WTC11 (cell line): ENCODE measurements at regions of chr17 and their contacts with region 1.

Region 1: GRCh38 chr17:48636177-48637018 is 10.2 kb upstream of the HOXB9 start:
- DNase-seq: peak; percentile 99
- ATAC-seq: peak; percentile 89
- H3K4me3 Mint-ChIP-seq: peak overlapping the region; percentile 45
- H3K27ac Mint-ChIP-seq: no peak overlapping the region
- H3K4me1 Mint-ChIP-seq: peaks cover 18% of the 10 kb centered on the region
- H3K27me3 Mint-ChIP-seq: peaks cover 100% of the 10 kb centered on the region; the same call in 1 of the 2 replicates
- CTCF ChIP-seq: peak; percentile 62

Region 2: DNA sequence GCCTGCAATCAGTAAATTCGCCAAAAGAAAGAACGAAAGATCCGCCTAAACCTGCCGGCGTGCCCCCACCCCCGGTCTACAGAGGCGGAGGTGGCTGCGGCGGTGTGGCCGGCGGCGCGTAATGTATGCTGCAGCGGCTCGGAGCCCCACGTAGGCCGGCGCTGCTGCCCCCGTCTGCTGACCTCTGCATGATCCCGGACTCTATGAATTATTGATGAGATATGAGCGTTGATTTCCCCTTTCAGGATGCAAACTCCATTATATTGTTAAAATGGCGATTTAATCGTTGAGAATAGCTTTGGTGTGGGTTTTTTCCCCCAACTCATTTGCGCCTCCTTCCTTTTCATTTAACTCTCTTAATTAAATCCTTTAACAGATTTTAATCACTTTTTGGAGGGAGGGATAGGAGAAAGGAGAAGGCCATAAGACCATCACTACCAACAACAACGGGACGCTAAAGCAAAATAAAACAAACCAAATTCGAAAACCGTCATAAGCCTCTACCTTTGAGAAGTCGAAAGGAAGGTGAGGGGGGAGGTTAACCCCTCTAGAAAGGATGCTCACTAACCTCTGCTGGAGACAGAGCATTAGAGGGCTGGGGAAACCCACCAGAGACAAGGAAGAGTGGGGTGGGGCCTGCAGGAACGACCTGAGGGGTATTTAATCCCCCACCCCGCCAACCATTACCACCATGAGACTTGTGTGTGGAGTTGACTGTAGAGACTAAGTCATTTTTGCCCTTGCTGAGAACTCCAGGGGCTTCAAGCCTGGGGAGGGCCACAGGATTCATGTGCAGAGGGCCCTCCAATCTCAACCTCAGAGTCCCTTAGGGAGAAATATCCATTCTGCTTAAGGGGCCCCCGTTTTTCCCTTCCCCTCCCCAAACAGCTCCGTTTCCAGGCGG is 49.8 kb before region 1 on chr17:
- CTCF ChIA-PET with region 1: interaction called, 21 read pairs
- POLR2A ChIA-PET with region 1: no interaction called
- DNase-seq: no peak
- ATAC-seq: no peak
- H3K4me3 Mint-ChIP-seq: no peak overlapping the region
- H3K27ac Mint-ChIP-seq: no peak overlapping the region
- H3K4me1 Mint-ChIP-seq: peaks cover 43% of the 10 kb centered on the region
- H3K27me3 Mint-ChIP-seq: peaks cover 100% of the 10 kb centered on the region; the same call in 1 of the 2 replicates
- CTCF ChIP-seq: no peak

Region 3: GRCh38 chr17:48625495-48626244 is 10.7 kb before region 1 on chr17:
- CTCF ChIA-PET with region 1: interaction called, 54 read pairs
- POLR2A ChIA-PET with region 1: no interaction called
- DNase-seq: peak; percentile 69
- ATAC-seq: peak; percentile 38
- H3K4me3 Mint-ChIP-seq: peak overlapping the region; percentile 61
- H3K27ac Mint-ChIP-seq: no peak overlapping the region
- H3K4me1 Mint-ChIP-seq: peaks cover 13% of the 10 kb centered on the region
- H3K27me3 Mint-ChIP-seq: peaks cover 100% of the 10 kb centered on the region; the same call in 1 of the 2 replicates
- CTCF ChIP-seq: no peak

Region 4: GRCh38 chr17:48671697-48672171 is 35.3 kb after region 1 on chr17:
- CTCF ChIA-PET with region 1: interaction called, 19 read pairs
- POLR2A ChIA-PET with region 1: no interaction called
- DNase-seq: peak; percentile 87
- ATAC-seq: peak; percentile 96
- H3K4me3 Mint-ChIP-seq: peak overlapping the region; percentile 72
- H3K27ac Mint-ChIP-seq: no peak overlapping the region
- H3K4me1 Mint-ChIP-seq: peaks cover 12% of the 10 kb centered on the region
- H3K27me3 Mint-ChIP-seq: peaks cover 53% of the 10 kb centered on the region
- CTCF ChIP-seq: peak; percentile 79

Region 5: DNA sequence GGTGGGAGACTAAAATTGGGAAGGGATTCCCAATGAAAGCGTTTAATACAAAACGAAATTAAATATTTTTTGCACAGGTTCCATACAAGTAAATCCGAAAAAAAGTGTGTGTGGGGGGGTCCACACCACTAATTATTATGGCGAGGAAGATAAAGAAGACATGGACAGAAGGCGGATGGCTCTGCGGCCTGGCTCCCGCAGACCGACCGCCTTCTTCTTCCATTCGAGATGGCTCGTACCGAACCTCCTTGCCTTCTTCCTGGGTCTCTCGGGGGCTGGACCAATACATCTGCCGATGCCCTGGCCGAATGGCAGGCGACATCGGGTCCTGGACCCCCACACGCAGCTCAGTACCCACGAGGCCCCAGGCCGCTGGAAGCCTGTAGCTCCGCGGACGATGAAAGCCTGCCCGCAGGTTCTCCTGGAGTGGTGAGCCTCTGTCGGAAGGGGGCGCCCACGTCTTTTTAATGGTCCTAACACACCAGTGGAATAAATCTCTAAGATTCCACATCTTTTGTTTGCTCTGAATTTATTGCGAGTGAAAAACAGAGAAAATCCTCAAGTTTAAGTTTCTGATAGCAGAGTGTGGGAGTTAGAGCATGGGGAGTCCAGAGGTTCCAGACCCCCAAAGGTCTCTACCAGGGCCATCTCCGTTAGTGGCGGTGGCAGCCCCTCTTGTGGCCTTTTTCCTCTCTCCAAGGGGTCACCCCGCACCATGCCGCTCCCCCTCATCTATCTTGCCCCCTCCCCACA is 88.0 kb after region 1 on chr17:
- CTCF ChIA-PET with region 1: interaction called, 25 read pairs
- POLR2A ChIA-PET with region 1: no interaction called
- DNase-seq: peak; percentile 86
- ATAC-seq: no peak
- H3K4me3 Mint-ChIP-seq: peak overlapping the region; percentile 70
- H3K27ac Mint-ChIP-seq: no peak overlapping the region
- H3K4me1 Mint-ChIP-seq: peaks cover 50% of the 10 kb centered on the region
- H3K27me3 Mint-ChIP-seq: peaks cover 100% of the 10 kb centered on the region
- CTCF ChIP-seq: peak; percentile 49; the same call in 1 of the 2 replicates